ENCODE measurements at regions of chr6 and their contacts with region 1.

Region 1: GRCh38 chr6:8570256-8570920 is 135.0 kb upstream of the SLC35B3 start:
- DNase-seq: no peak

Region 2: GRCh38 chr6:8481718-8482117 is 88.7 kb before region 1 on chr6:
- CTCF ChIA-PET with region 1: interaction called, 12 read pairs
- POLR2A ChIA-PET with region 1: no interaction called
- DNase-seq: peak; percentile 36